HCT116 (cell line): ENCODE measurements at regions of chr20 and their contacts with region 1.

Region 1: GRCh38 chr20:59571551-59572314 is 32.6 kb upstream of the PHACTR3 start:
- DNase-seq: peak; percentile 12
- ATAC-seq: peak; percentile 88
- H3K4me3 ChIP-seq: no peak overlapping the region
- H3K27ac ChIP-seq: no peak overlapping the region
- H3K4me1 ChIP-seq: 0 out of 4 replicates have a peak, but pooled peaks cover 0 to 2% of the 10 kb centered on the region in 2 experiments
- H3K27me3 ChIP-seq: 0 out of 2 replicates have a peak, but pooled peaks cover 6% of the 10 kb centered on the region
- CTCF ChIP-seq: peak; percentile 43 to 95 (median 94); a peak in 4 of 6 replicates
- POLR2A ChIP-seq: no peak
- RAD21 ChIP-seq: peak; percentile 48

Region 2: DNA sequence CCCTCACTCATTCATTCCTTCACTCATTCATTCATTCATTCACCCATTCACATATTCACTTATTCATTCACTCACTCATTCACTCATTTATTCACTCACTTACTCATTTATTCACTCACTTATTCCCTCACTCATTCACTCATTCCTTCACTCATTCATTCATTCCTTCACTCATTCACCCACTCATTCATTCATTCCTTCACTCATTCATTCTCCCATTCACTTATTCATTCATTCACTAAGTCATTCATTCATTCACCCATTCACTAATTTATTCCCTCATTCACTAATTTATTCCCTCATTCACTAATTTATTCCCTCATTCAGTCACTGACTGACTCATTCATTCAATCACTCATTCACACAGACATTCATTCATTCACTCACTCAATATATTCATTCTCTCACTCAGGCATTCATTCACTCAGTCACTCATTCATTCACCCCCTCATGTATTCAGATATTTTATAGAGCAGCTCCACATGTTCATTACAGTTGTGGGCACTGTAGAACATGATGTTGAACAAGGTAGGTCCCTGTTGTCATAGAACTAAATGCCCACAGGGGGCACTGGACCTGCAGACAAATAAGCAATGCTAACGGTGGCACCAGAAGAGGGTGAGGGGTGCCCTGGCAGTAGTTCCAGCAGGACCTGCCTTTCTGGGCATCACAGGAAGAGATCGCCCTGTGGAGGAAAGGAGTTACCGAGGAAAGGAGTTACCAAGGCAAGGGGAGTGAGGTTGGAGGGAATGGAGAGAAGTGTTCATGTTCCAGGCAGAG is 143.5 kb before region 1 on chr20:
- CTCF ChIA-PET with region 1: no interaction called
- POLR2A ChIA-PET with region 1: no interaction called
- RAD21 ChIA-PET with region 1: no interaction called
- intact Hi-C with region 1: no loop called
- DNase-seq: peak; percentile 16
- ATAC-seq: peak; percentile 83
- H3K4me3 ChIP-seq: no peak overlapping the region
- H3K27ac ChIP-seq: no peak overlapping the region
- H3K4me1 ChIP-seq: no peaks in the 10 kb centered on the region
- H3K27me3 ChIP-seq: peaks cover 11% of the 10 kb centered on the region
- CTCF ChIP-seq: peak in 2 of 3 experiments; percentile 58 to 66; a peak in 4 of 6 replicates
- POLR2A ChIP-seq: no peak
- RAD21 ChIP-seq: no peak

Region 3: GRCh38 chr20:59560588-59561227 is 11.0 kb before region 1 on chr20:
- CTCF ChIA-PET with region 1: interaction called, 14 read pairs
- POLR2A ChIA-PET with region 1: no interaction called
- RAD21 ChIA-PET with region 1: no interaction called
- intact Hi-C with region 1: no loop called
- DNase-seq: peak; percentile 13
- ATAC-seq: peak; percentile 86
- H3K4me3 ChIP-seq: no peak overlapping the region
- H3K27ac ChIP-seq: no peak overlapping the region
- H3K4me1 ChIP-seq: no peaks in the 10 kb centered on the region
- H3K27me3 ChIP-seq: peaks cover 12% of the 10 kb centered on the region; the same call in 1 of the 2 replicates
- CTCF ChIP-seq: peak in 2 of 3 experiments; percentile 68 to 73; a peak in 4 of 6 replicates
- POLR2A ChIP-seq: no peak
- RAD21 ChIP-seq: no peak

Region 4: GRCh38 chr20:59751056-59751688 is 179.4 kb after region 1 on chr20:
- CTCF ChIA-PET with region 1: interaction called, 6 read pairs
- POLR2A ChIA-PET with region 1: no interaction called
- RAD21 ChIA-PET with region 1: no interaction called
- intact Hi-C with region 1: loop called (anchors 1 kb)
- DNase-seq: peak; percentile 27
- ATAC-seq: peak; percentile 95
- H3K4me3 ChIP-seq: no peak overlapping the region
- H3K27ac ChIP-seq: no peak overlapping the region
- H3K4me1 ChIP-seq: no peaks in the 10 kb centered on the region
- H3K27me3 ChIP-seq: peaks cover 11% of the 10 kb centered on the region; the same call in 1 of the 2 replicates
- CTCF ChIP-seq: peak; percentile 75 to 89 (median 81)
- POLR2A ChIP-seq: no peak
- RAD21 ChIP-seq: peak; percentile 81